ENCODE measurements at regions of chr18 and their contacts with region 1.

Region 1: DNA sequence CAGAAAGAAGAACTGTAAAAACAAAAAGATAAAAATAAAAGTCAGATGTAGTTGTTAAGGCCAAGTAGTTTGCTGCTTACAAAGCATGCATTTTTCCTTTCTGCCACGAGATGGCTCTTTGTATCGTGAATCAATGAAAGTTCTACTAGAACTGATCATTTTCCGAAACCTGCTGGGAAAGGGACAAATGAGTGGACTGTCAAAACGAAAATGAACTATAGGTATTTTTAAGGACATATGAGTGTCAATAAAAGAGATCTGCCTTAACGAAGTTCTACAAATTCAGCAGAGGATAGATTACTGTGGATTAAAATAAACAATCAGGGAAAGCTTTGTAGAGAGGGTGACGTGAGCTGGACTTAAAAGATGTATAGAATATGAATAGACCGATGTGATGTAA is 15.0 kb upstream of the ELOA2 start:
- DNase-seq: peak; percentile 32
- H3K4me3 Mint-ChIP-seq: no peak overlapping the region
- H3K27ac Mint-ChIP-seq: no peak overlapping the region
- H3K4me1 Mint-ChIP-seq: peaks cover 8% of the 10 kb centered on the region
- H3K27me3 Mint-ChIP-seq: peaks cover 37% of the 10 kb centered on the region
- CTCF ChIP-seq: peak; percentile 62

Region 2: DNA sequence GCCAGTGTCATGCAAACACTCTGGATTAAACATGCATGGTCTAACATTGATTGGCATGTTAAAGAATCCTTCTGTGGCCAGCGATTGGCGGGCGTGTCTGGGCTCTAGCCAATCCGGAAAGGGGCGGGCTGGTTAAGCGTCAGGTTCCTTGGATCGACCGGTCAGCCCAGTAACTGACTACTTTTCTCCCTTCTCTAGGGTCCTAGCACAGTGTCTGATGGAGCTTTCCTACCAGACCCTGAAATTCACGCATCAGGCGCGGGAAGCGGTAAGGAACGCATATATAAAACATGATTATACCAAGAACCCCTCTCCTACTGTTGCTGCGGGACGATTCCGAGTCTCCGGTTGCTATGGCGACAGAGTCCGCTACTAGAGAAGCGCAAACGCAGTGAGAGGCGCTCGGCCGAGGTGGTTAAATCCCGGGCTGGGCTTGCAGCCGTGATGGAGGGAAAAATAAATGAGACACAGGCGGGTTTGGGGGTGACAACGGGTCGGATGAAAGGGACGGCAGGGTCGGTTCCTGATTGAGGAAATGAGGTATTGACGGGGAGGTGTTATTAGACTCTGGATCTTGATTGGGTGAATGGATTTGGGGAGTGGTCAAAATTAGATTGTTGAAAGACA is 103.7 kb before region 1 on chr18:
- CTCF ChIA-PET with region 1: no interaction called
- intact Hi-C with region 1: no loop called
- DNase-seq: peak; percentile 89
- H3K4me3 Mint-ChIP-seq: no peak overlapping the region
- H3K27ac Mint-ChIP-seq: no peak overlapping the region
- H3K4me1 Mint-ChIP-seq: no peaks in the 10 kb centered on the region
- H3K27me3 Mint-ChIP-seq: no peaks in the 10 kb centered on the region
- CTCF ChIP-seq: no peak

Region 3: DNA sequence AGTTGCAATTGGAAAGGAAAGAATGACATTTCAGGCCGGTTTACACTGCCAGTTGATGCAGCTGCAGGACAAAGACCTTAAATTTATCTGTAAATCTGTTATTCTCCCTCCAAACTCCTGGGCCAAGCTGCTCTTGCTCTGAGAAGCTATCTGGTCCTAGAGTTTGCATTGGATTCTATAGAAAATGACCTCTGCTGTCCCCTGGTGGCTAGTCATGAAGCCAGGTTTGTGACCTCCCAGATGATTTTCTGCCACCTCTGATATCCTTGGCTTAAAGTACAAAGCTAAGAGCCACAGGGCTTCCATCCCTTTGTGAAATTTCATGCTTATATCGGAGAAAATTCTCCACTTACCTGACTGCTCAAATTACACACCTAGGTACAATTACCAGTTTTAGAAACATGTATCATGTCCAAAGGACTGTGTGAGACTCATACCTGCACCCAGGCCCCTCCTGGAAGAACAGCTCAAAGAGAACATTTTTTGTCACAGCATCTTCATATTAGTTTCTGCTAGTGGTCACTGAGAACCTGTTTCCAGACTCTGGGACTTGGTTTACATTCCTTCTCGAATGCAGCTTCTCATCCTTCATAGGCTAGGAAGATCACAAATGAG is 154.5 kb after region 1 on chr18:
- CTCF ChIA-PET with region 1: interaction called, 3 read pairs
- intact Hi-C with region 1: loop called (anchors 2 kb)
- DNase-seq: peak; percentile 54
- H3K4me3 Mint-ChIP-seq: no peak overlapping the region
- H3K27ac Mint-ChIP-seq: no peak overlapping the region
- H3K4me1 Mint-ChIP-seq: no peaks in the 10 kb centered on the region
- H3K27me3 Mint-ChIP-seq: peaks cover 91% of the 10 kb centered on the region
- CTCF ChIP-seq: peak; percentile 66

Region 4: GRCh38 chr18:47756364-47757016 is 706.0 kb after region 1 on chr18:
- CTCF ChIA-PET with region 1: no interaction called
- intact Hi-C with region 1: loop called (anchors 2 kb)
- DNase-seq: peak; percentile 78
- H3K4me3 Mint-ChIP-seq: no peak overlapping the region
- H3K27ac Mint-ChIP-seq: no peak overlapping the region
- H3K4me1 Mint-ChIP-seq: no peaks in the 10 kb centered on the region
- H3K27me3 Mint-ChIP-seq: peaks cover 55% of the 10 kb centered on the region
- CTCF ChIP-seq: peak; percentile 92